HepG2 (cell line): ENCODE measurements at regions of chr19 and their contacts with region 1.

Region 1: GRCh38 chr19:18985257-18985656 is 44.2 kb upstream of the HOMER3 start:
- DNase-seq: no peak
- ATAC-seq: no peak
- H3K4me3 ChIP-seq: no peak overlapping the region
- H3K27ac ChIP-seq: no peak overlapping the region
- H3K4me1 ChIP-seq: peaks cover 10% of the 10 kb centered on the region
- H3K27me3 ChIP-seq: peaks cover 0 to 34% of the 10 kb centered on the region in 2 experiments; a peak in 3 of 5 replicates
- CTCF ChIP-seq: no peak
- EP300 ChIP-seq: no peak
- POLR2A ChIP-seq: no peak
- RAD21 ChIP-seq: no peak

Region 2: GRCh38 chr19:18895038-18895823 is 90.0 kb before region 1 on chr19:
- CTCF ChIA-PET with region 1: interaction called, 24 read pairs
- POLR2A ChIA-PET with region 1: interaction called, 7 read pairs
- in situ Hi-C with region 1: loop called (anchors 10 kb)
- intact Hi-C with region 1: loop called (anchors 1 kb)
- DNase-seq: peak; percentile 79
- ATAC-seq: peak; percentile 91
- H3K4me3 ChIP-seq: peak overlapping the region; percentile 46 to 75 (median 70); a peak in 5 of 6 replicates
- H3K27ac ChIP-seq: no peak overlapping the region
- H3K4me1 ChIP-seq: peaks cover 23% of the 10 kb centered on the region
- H3K27me3 ChIP-seq: no peaks in the 10 kb centered on the region; a peak in 1 of 5 replicates
- CTCF ChIP-seq: peak; percentile 96
- EP300 ChIP-seq: no peak
- POLR2A ChIP-seq: peak; percentile 31 to 34; a peak in 2 of 4 replicates
- RAD21 ChIP-seq: peak; percentile 89

Region 3: DNA sequence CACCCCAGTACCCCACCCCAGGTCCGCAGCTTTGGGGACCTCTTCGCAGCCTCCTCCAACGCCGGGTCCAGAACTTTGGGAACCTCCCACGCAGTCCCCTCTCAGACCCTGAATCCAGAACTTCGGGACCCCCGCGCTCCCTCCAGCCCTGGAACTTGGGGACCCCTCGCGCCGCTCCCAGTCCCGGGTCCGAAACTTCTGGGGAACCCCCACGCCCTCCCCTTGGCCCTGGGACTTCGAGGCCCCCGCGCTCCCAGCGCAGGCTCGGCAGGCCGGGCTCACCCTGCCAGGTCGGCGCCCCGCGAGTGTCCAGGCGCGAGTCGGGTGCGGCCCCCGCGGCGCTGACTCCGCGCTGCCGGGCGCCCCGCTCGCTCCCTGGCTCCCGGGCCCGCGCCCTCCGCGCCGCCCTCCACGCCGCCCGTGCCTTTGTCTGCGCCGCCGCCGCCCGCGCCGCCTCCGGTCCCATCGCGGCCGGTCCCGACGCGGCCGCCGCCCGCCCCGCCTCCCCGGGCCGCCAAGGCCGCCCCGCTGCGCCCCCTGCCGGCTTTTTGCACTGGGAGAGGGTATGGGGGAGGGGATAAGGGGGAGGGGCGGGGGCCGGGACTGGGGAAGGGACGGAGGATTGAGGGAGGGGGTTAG is 44.4 kb before region 1 on chr19 and contains the start of gene HOMER3:
- CTCF ChIA-PET with region 1: interaction called, 13 read pairs
- POLR2A ChIA-PET with region 1: no interaction called
- in situ Hi-C with region 1: loop called (anchors 5 kb)
- intact Hi-C with region 1: loop called (anchors 1 kb)
- DNase-seq: no peak
- ATAC-seq: peak; percentile 56
- H3K4me3 ChIP-seq: peak within 1 kb of the TSS; percentile 60 to 85 (median 74)
- H3K27ac ChIP-seq: no peak within 1 kb of the TSS
- H3K4me1 ChIP-seq: peaks cover 52% of the 10 kb centered on the region
- H3K27me3 ChIP-seq: no peaks in the 10 kb centered on the region
- CTCF ChIP-seq: peak; percentile 15; the same call in 1 of the 2 replicates
- EP300 ChIP-seq: no peak
- POLR2A ChIP-seq: no peak
- RAD21 ChIP-seq: 0 out of 2 replicates have a peak, but pooled peaks have one; percentile 10
- total RNA-seq, gene HOMER3: 16.0 and 21.3 TPM in 2 replicates

Region 4: DNA sequence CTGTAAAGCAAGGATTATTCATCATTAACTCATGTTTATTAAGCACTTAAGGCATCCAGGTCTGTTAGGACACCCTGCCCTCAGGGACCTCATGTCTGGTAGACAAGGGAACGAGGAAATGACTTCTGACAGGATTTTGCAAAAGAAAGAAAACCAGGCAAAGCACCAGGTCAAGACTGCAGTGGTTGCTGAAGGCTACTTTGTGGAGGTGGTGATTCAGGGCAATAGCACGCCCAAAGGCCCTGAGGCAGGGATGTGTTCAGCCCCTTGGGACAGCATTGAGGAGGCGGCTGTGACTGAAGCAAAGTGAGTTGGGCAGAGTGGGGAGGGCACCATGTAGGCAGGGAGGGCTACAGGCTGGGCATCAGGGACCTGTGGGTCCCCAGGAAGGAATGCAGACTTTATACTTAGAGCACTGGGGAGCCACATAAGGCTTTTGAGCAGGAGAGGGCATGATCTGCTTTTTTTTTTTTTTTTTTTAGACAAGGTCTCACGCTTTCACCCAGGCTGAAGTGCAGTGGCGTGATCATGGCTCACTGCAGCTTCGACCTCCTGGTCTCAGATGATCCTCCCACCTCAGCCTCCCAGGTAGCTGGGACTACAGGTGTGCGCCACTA is 33.5 kb before region 1 on chr19:
- CTCF ChIA-PET with region 1: no interaction called
- POLR2A ChIA-PET with region 1: no interaction called
- in situ Hi-C with region 1: no loop called
- intact Hi-C with region 1: no loop called
- DNase-seq: no peak
- ATAC-seq: no peak
- H3K4me3 ChIP-seq: no peak overlapping the region
- H3K27ac ChIP-seq: no peak overlapping the region
- H3K4me1 ChIP-seq: peaks cover 28% of the 10 kb centered on the region
- H3K27me3 ChIP-seq: no peaks in the 10 kb centered on the region
- CTCF ChIP-seq: no peak
- EP300 ChIP-seq: no peak
- POLR2A ChIP-seq: no peak
- RAD21 ChIP-seq: no peak

Region 5: GRCh38 chr19:19121371-19121770 is 136.1 kb after region 1 on chr19:
- CTCF ChIA-PET with region 1: no interaction called
- POLR2A ChIA-PET with region 1: no interaction called
- in situ Hi-C with region 1: no loop called
- intact Hi-C with region 1: no loop called
- DNase-seq: no peak
- ATAC-seq: no peak; the same call in 2 of the 3 replicates
- H3K4me3 ChIP-seq: no peak overlapping the region
- H3K27ac ChIP-seq: no peak overlapping the region
- H3K4me1 ChIP-seq: no peaks in the 10 kb centered on the region
- H3K27me3 ChIP-seq: no peaks in the 10 kb centered on the region
- CTCF ChIP-seq: no peak
- EP300 ChIP-seq: no peak
- POLR2A ChIP-seq: no peak
- RAD21 ChIP-seq: no peak